CD4-positive, alpha-beta memory T cell (primary cell): ENCODE measurements at regions of chr10 and their contacts with region 1.

Region 1: DNA sequence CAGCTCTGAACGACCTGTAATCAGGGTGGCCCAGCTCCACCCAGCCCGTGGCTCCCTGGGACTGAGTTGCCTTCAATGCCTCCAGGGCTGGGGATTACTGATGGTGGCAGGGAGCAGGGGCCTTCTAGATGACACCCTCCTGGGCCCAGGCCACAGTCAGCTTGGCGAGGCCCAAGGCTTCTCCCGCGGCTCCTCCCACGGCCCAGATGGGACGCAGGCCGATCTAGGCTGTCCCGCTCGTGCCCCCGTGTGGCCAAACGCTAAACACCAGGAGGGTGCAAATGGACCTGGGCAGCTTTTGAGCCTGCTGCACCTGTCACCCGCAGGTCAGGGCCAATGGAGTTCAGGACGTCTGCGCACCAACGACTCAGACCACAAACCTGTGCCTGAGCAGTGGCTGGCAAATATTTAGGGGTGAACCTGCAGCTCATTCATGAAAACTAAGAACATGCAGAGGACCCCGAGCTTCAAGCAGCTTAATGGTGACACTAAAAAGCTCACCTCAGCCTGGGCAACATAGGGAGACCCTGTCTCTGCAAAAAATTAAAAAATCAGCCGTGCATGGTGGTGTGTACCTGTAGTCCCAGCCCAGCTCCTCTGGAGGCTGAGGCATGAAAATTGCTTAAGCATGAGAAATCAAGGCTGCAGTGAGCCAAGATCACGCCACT is 43.2 kb downstream of the ASB13 start:
- DNase-seq: peak; percentile 68 to 75 (median 70)
- H3K4me3 ChIP-seq: no peak overlapping the region
- H3K4me3 Mint-ChIP-seq: no peak overlapping the region
- H3K27ac ChIP-seq: no peak overlapping the region
- H3K27ac Mint-ChIP-seq: no peak overlapping the region
- H3K4me1 ChIP-seq: no peaks in the 10 kb centered on the region
- H3K4me1 Mint-ChIP-seq: peaks cover 0 to 7% (median 3%) of the 10 kb centered on the region in 4 donors
- H3K27me3 ChIP-seq: no peaks in the 10 kb centered on the region
- H3K27me3 Mint-ChIP-seq: no peaks in the 10 kb centered on the region

Region 2: DNA sequence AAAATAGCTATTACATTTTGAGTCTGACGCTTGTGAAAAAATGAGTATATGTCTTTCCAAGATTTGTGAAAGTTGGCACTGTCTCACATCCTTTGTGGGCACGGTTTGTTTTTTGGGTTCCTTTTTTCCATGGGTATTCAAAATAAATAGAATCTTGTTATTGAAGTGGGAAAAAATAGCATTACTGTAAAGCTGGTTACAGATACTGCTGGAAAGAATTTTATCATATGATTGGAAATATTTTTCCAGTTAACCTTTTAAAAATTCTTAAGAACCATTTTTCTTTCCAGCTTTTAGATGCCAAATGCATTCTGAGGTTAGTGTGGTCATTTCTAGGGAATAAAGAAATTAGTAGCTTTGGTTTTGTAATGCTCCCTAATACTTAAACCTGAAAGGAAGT is 199.4 kb before region 1 on chr10:
- CTCF ChIA-PET with region 1: interaction called, 12 read pairs
- POLR2A ChIA-PET with region 1: no interaction called
- intact Hi-C with region 1: no loop called
- DNase-seq: no peak
- H3K4me3 ChIP-seq: no peak overlapping the region
- H3K4me3 Mint-ChIP-seq: no peak overlapping the region
- H3K27ac ChIP-seq: no peak overlapping the region
- H3K27ac Mint-ChIP-seq: no peak overlapping the region
- H3K4me1 ChIP-seq: no peaks in the 10 kb centered on the region
- H3K4me1 Mint-ChIP-seq: no peaks in the 10 kb centered on the region
- H3K27me3 ChIP-seq: no peaks in the 10 kb centered on the region
- H3K27me3 Mint-ChIP-seq: no peaks in the 10 kb centered on the region

Region 3: DNA sequence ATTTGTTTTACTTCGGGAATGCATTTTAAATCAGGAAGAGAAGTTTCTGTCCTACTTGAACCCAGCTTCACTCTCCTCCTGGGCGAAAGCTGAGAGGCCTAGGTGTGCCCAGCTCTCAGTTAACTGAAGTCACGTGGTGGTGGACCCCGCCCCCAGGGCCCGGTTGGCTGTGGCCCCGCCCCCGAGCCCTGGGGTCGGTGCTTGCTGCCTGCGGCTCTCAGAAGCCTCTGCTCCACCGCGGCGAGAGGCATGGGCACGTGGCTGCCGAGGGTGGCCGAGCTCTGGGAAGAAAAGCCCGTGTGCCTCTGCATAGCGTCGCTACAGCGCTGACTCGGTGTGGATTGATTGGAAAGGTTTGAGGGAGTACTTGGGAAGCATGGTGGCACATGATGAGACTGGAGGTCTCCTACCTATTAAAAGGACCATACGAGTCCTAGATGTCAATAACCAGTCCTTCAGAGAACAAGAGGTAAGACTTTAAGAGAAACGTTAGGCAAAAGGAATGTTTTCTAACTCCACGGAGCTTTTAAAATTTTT is 176.8 kb before region 1 on chr10:
- CTCF ChIA-PET with region 1: interaction called, 468 read pairs
- POLR2A ChIA-PET with region 1: interaction called, 29 read pairs
- intact Hi-C with region 1: loop called (anchors 1 kb)
- DNase-seq: peak; percentile 46 to 72 (median 56)
- H3K4me3 ChIP-seq: peak overlapping the region in 1 of 2 donors; percentile 10
- H3K4me3 Mint-ChIP-seq: peak overlapping the region; percentile 81 to 90 (median 86)
- H3K27ac ChIP-seq: no peak overlapping the region
- H3K27ac Mint-ChIP-seq: peak overlapping the region; percentile 45 to 93 (median 85)
- H3K4me1 ChIP-seq: peaks cover 23% of the 10 kb centered on the region
- H3K4me1 Mint-ChIP-seq: peaks cover 13 to 40% (median 27%) of the 10 kb centered on the region in 4 donors
- H3K27me3 ChIP-seq: no peaks in the 10 kb centered on the region
- H3K27me3 Mint-ChIP-seq: no peaks in the 10 kb centered on the region

Region 4: DNA sequence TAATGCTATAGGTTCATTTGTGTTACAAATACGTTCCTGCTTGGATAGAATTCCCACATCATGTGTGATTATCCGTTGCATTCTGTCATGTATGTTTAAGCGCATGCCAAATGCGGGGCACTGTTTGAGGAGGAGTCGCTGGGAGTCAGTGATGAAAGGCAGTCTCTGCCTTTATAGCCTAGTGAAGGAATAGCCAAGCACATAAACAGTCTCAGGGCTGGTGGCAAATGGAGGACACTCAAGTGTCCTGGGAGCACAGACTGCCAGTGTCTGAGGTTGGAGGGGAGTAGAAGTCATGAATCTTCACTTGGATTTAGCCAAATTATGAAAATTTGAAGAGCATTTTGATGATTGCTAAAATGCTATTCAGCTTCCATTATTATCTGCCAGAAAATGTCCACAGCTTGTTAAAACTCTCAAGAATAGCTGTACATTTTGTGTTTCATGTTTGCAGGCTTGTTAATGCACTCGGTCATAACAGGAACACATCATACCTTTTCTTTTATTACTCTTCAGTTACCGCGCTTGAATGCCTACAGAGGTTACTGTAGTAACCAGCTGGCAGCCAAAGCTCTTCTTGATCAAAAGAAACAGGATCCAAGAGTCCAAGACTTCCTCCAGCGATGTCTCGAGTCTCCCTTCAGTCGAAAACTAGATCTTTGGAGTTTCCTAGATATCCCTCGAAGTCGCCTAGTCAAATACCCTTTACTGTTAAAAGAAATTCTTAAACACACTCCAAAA is 169.3 kb before region 1 on chr10:
- CTCF ChIA-PET with region 1: interaction called, 468 read pairs
- POLR2A ChIA-PET with region 1: interaction called, 29 read pairs
- intact Hi-C with region 1: no loop called
- DNase-seq: no peak
- H3K4me3 ChIP-seq: no peak overlapping the region
- H3K4me3 Mint-ChIP-seq: no peak overlapping the region
- H3K27ac ChIP-seq: no peak overlapping the region
- H3K27ac Mint-ChIP-seq: peak overlapping the region in 1 of 7 donors; percentile 25
- H3K4me1 ChIP-seq: peaks cover 7% of the 10 kb centered on the region
- H3K4me1 Mint-ChIP-seq: peaks cover 4 to 13% (median 7%) of the 10 kb centered on the region in 4 donors
- H3K27me3 ChIP-seq: no peaks in the 10 kb centered on the region
- H3K27me3 Mint-ChIP-seq: no peaks in the 10 kb centered on the region

Region 5: GRCh38 chr10:5461914-5462840 is 161.0 kb before region 1 on chr10:
- CTCF ChIA-PET with region 1: interaction called, 10 read pairs
- POLR2A ChIA-PET with region 1: no interaction called
- intact Hi-C with region 1: no loop called
- DNase-seq: no peak
- H3K4me3 ChIP-seq: no peak overlapping the region
- H3K4me3 Mint-ChIP-seq: no peak overlapping the region
- H3K27ac ChIP-seq: no peak overlapping the region
- H3K27ac Mint-ChIP-seq: no peak overlapping the region
- H3K4me1 ChIP-seq: peaks cover 7% of the 10 kb centered on the region
- H3K4me1 Mint-ChIP-seq: peaks cover 4 to 7% (median 5%) of the 10 kb centered on the region in 4 donors
- H3K27me3 ChIP-seq: no peaks in the 10 kb centered on the region
- H3K27me3 Mint-ChIP-seq: peaks cover 0 to 3% of the 10 kb centered on the region in 2 donors

Region 6: DNA sequence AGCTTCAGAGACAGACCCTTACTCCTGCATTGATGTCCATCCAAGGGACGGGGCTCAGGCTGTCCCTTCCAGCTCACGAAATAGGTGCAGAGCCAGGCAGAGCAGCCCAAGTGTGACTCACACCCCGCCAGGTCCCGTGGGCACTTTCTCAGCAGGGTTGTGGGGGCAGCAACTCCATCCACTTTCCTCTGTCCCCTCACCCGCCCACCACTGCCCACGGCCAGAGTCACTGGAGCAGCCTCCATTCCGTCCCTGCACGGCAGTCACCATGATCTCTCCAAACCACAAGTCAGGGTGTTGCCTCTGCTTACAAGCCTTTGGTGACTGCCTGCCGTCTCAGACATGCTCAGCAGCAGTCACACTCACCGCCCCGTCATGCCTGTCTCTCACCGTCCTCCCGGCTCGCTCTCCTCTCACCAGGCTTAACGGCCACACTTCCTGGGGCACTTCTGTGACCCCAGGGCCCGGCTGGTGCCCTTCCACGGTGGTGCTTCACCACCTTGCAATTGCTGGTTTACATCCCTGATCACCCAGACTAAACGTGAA is 59.2 kb before region 1 on chr10:
- CTCF ChIA-PET with region 1: interaction called, 22 read pairs
- POLR2A ChIA-PET with region 1: interaction called, 7 read pairs
- intact Hi-C with region 1: no loop called
- DNase-seq: peak; percentile 52 to 67 (median 58)
- H3K4me3 ChIP-seq: peak overlapping the region; percentile 19 to 67
- H3K4me3 Mint-ChIP-seq: peak overlapping the region; percentile 81 to 95 (median 86)
- H3K27ac ChIP-seq: peak overlapping the region; percentile 61
- H3K27ac Mint-ChIP-seq: peak overlapping the region; percentile 96 to 99 (median 98)
- H3K4me1 ChIP-seq: peaks cover 33% of the 10 kb centered on the region
- H3K4me1 Mint-ChIP-seq: peaks cover 29 to 49% (median 35%) of the 10 kb centered on the region in 4 donors
- H3K27me3 ChIP-seq: no peaks in the 10 kb centered on the region
- H3K27me3 Mint-ChIP-seq: peaks cover 0 to 3% of the 10 kb centered on the region in 2 donors